ENCODE measurements at regions of chr1 and their contacts with region 1.

Region 1: DNA sequence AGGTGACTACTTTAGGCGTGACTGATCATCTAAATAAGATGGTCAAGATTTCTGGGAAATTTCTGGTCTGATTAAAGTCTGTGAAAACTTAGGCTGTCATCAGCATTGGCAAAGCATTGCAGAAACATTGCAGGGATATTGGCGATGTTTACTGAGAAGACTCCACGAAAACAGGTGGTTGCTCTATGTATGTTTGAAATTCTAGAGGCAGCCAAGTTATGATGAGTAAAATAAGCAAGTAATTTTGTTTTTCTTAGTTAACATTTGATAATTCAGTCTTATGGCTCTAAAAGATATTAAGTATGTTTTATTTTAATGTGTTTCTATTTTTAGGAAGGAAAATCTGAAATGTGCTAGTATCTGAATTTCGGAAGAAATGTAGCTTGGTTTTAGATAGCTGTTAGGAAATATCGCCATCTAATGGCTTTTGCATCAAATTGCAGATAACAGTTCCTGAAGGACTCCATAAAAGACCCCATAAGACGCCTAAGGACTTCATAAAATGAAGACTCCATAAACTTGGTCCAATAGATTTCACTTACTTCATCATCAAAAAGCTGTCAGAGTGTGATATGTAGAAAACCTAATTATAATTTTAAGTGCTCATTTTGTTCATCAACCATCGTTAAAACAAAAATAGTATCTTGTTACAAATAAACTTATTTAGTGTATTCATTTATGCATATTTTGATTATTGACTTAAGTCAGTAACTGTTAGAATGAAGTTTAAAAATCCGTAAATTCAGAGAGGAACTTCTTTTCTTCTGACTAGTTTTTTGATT is 344.6 kb downstream of the RYR2 start:
- DNase-seq: no peak
- H3K4me3 ChIP-seq: no peak overlapping the region
- H3K27ac ChIP-seq: no peak overlapping the region
- H3K4me1 ChIP-seq: no peaks in the 10 kb centered on the region
- H3K27me3 ChIP-seq: no peaks in the 10 kb centered on the region
- CTCF ChIP-seq: peak; percentile 43

Region 2: DNA sequence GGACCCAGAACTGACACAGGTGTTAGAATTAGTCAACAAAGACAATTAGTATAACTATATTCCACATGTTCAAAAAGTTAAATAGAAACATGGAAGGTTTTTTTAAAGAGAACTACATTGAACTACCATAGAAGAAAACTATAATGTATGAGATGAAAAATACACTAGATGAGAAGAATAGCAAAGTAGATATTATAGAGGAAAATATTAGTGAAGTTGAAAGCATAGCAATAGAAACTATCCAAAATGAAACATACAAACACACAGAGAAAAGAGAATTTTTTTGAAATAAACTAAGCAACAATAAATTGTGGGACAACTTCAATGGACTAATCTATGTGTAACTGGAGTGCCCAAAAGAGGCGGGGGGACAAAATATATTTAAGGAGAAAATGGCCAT is 774.2 kb before region 1 on chr1:
- intact Hi-C with region 1: loop called (anchors 5 kb)
- DNase-seq: no peak
- H3K4me3 ChIP-seq: no peak overlapping the region
- H3K27ac ChIP-seq: no peak overlapping the region
- H3K4me1 ChIP-seq: no peaks in the 10 kb centered on the region
- H3K27me3 ChIP-seq: no peaks in the 10 kb centered on the region
- CTCF ChIP-seq: no peak

Region 3: DNA sequence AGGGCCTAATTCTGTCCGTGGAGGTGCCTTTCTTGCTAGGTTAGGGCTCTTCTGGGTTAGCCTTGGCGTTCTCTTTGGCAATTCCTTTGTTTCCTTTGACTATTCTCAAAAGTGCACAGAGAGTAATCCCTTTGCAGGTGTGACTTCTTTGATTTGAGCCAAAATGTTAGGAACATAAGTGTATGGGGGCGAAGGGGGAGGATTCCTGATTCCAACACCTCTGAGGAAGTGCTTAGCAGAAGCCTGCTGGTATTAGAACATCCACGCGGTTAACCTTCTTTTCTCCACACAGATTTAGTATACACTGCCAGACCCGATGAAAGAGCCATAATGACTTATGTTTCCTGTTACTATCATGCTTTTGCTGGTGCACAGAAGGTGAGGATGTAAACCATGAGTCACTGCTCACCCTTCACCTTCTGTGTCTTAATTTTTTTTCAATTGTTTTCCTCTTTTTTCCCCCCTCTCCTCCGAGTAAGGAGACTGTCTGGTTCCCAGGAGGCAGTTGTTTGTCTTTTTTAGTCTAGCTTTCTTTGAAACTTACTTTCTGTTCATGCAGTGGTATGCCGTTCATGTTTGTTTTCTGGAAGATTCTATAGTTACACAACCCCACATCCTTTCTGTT is 652.3 kb before region 1 on chr1:
- intact Hi-C with region 1: loop called (anchors 10 kb)
- DNase-seq: no peak
- H3K4me3 ChIP-seq: no peak overlapping the region
- H3K27ac ChIP-seq: no peak overlapping the region
- H3K4me1 ChIP-seq: no peaks in the 10 kb centered on the region
- H3K27me3 ChIP-seq: no peaks in the 10 kb centered on the region
- CTCF ChIP-seq: no peak

Region 4: GRCh38 chr1:237041795-237042525 is 344.6 kb before region 1 on chr1 and contains the start of gene RYR2:
- intact Hi-C with region 1: loop called (anchors 10 kb)
- DNase-seq: no peak
- H3K4me3 ChIP-seq: peak within 1 kb of the TSS; percentile 13
- H3K27ac ChIP-seq: no peak within 1 kb of the TSS
- H3K4me1 ChIP-seq: no peaks in the 10 kb centered on the region
- H3K27me3 ChIP-seq: peaks cover 24% of the 10 kb centered on the region
- CTCF ChIP-seq: peak; percentile 14
- total RNA-seq, gene RYR2: 0.15 to 0.56 TPM

Region 5: DNA sequence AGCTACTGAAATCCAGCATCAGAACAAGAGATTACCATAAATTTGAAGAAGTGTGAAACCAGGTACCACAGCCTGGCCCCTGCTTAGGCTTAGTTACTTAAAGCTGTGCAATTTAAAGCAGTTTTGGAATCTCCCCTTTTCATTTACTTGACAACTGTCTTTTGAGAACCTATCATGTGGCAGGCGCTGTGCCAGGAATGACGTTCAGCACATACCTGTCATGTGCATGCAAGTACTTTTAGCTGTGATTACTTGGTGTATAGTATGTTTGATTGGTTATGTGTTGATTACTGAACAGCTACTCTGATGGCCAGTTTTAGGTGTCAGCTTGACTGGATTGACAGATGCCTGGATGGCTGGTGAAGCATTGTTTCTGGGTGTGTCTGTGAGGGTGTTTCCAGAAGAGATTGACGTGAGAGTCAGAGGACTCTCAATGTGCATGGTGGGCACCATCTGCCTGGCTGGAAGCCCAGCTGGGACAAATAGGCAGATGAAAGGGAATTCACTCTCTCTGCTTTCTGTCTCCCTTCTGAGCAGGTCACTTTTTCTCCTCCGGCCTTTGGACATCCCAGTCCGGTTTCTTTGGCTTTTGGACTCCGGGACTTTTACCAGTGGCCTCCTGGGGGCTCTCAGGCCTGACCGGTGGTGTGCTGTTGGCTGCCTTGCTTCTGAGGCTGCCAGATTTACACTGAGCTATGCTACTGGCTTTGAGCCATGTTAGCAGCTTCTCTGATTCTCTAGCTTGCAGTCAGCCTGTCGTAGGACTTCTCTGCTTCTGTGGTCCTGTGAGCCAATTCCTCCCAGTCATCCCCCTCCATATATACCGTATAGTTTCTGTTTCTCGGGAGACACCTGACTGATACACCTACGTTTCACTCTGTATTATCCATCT is 166.6 kb before region 1 on chr1:
- intact Hi-C with region 1: no loop called
- DNase-seq: no peak
- H3K4me3 ChIP-seq: no peak overlapping the region
- H3K27ac ChIP-seq: no peak overlapping the region
- H3K4me1 ChIP-seq: no peaks in the 10 kb centered on the region
- H3K27me3 ChIP-seq: no peaks in the 10 kb centered on the region
- CTCF ChIP-seq: no peak

Region 6: DNA sequence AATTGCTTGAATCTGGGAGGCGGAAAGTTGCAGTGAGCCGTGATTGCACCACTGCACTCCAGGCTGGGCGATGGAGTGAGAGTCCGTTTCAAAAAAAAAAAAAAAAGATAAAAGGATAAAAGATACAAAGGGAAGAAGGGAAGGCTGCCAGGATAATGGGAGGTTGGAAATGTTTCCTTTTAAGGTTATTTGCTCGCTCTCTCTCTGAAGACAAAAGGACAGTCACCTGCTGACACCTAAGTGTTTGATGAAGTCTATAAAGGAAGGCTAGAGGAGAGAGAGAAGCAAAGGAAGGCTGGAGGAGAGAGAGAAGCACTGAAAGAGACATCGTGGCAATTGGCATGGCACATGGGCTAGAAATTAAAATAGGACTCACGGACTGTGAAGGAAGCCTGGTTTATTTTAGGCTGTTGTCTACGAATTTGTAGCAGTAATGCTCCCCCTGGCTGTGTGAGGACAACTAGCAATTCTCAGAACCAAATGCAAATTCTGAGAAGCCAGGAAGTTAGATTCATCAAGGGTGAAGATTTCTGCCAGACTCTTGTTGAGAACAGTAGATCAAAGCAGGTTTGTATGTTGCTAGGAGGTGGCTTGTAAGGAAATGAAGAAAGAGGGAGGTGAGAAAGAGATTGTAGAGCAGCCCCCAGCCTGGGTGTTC is 349.9 kb after region 1 on chr1:
- intact Hi-C with region 1: no loop called
- DNase-seq: no peak
- H3K4me3 ChIP-seq: no peak overlapping the region
- H3K27ac ChIP-seq: no peak overlapping the region
- H3K4me1 ChIP-seq: no peaks in the 10 kb centered on the region
- H3K27me3 ChIP-seq: no peaks in the 10 kb centered on the region
- CTCF ChIP-seq: no peak